Activated B cell treated with CpG ODN at 0.5 μM for 24 hours (primary cell): ENCODE measurements at regions of chr2 and their contacts with region 1.

Region 1: GRCh38 chr2:136117909-136118818 is at the start of gene CXCR4:
- DNase-seq: peak; percentile 90
- ATAC-seq: peak; percentile 51
- H3K4me3 Mint-ChIP-seq: peak within 1 kb of the TSS; percentile 96
- H3K27ac Mint-ChIP-seq: peak within 1 kb of the TSS; percentile 97
- H3K4me1 Mint-ChIP-seq: peaks cover 66% of the 10 kb centered on the region
- H3K27me3 Mint-ChIP-seq: no peaks in the 10 kb centered on the region
- CTCF ChIP-seq: no peak
- total RNA-seq, gene CXCR4: 200 and 213 TPM in 2 replicates

Region 2: DNA sequence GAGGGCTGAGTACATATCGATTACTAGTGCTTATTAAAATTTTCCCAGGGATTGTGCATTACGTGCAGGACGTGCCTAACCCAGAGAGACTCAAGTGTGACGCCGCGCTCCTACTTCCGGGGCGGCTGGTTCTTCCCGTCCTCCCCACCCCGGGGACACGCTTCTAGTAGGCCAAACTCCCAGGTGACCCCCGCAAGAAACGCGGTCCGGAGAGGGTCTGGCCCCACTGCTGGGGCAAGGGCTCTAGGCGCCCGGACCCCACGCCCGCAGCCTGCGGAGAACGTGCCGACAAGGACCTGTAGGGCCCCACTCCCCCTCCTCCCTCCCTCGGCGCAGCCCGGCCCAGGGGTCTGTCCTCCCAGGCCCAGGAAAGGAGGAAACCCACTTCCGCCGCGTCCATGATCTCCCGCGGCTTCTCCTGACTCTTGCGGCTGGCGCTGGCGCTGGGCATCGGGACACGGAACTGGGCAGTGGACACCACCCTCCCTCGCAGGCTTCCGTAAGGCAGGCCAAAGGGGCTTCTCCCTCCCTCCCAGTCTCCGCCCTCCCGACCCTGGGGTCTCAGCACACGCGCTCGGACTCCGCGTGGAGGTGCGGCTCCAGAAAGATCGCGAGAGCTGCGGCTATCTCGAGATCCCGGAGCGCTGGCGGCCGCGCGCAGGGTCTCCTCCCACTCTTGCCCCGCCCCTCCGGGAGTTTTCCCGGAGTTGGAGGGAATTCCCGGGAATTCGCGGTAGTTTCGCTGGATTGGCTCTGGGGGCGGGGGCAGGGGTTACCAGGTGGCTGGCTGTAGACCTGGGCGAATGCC is 132.9 kb before region 1 on chr2 and contains the start of gene DARS1:
- CTCF ChIA-PET with region 1: no interaction called
- POLR2A ChIA-PET with region 1: interaction called, 9 read pairs
- intact Hi-C with region 1: loop called (anchors 1 kb)
- DNase-seq: peak; percentile 80
- ATAC-seq: peak; percentile 86
- H3K4me3 Mint-ChIP-seq: peak within 1 kb of the TSS; percentile 95
- H3K27ac Mint-ChIP-seq: peak within 1 kb of the TSS; percentile 97
- H3K4me1 Mint-ChIP-seq: peaks cover 50% of the 10 kb centered on the region
- H3K27me3 Mint-ChIP-seq: no peaks in the 10 kb centered on the region
- CTCF ChIP-seq: no peak
- total RNA-seq, gene DARS1: 96.3 and 103 TPM in 2 replicates

Region 3: GRCh38 chr2:136029149-136029548 is 89.0 kb before region 1 on chr2:
- CTCF ChIA-PET with region 1: no interaction called
- POLR2A ChIA-PET with region 1: interaction called, 10 read pairs
- intact Hi-C with region 1: no loop called
- DNase-seq: no peak
- ATAC-seq: no peak
- H3K4me3 Mint-ChIP-seq: no peak overlapping the region
- H3K27ac Mint-ChIP-seq: no peak overlapping the region
- H3K4me1 Mint-ChIP-seq: peaks cover 17% of the 10 kb centered on the region
- H3K27me3 Mint-ChIP-seq: no peaks in the 10 kb centered on the region
- CTCF ChIP-seq: no peak

Region 4: GRCh38 chr2:136212423-136213378 is 94.5 kb after region 1 on chr2:
- CTCF ChIA-PET with region 1: interaction called, 9 read pairs
- POLR2A ChIA-PET with region 1: interaction called, 166 read pairs
- intact Hi-C with region 1: no loop called
- DNase-seq: no peak
- ATAC-seq: peak; percentile 72
- H3K4me3 Mint-ChIP-seq: peak overlapping the region; percentile 64
- H3K27ac Mint-ChIP-seq: peak overlapping the region; percentile 97
- H3K4me1 Mint-ChIP-seq: peaks cover 97% of the 10 kb centered on the region
- H3K27me3 Mint-ChIP-seq: no peaks in the 10 kb centered on the region
- CTCF ChIP-seq: no peak

Region 5: GRCh38 chr2:136255648-136256463 is 137.7 kb after region 1 on chr2:
- CTCF ChIA-PET with region 1: no interaction called
- POLR2A ChIA-PET with region 1: interaction called, 63 read pairs
- intact Hi-C with region 1: loop called (anchors 1 kb)
- DNase-seq: no peak
- ATAC-seq: peak; percentile 63
- H3K4me3 Mint-ChIP-seq: peak overlapping the region; percentile 55
- H3K27ac Mint-ChIP-seq: peak overlapping the region; percentile 92
- H3K4me1 Mint-ChIP-seq: peaks cover 86% of the 10 kb centered on the region
- H3K27me3 Mint-ChIP-seq: no peaks in the 10 kb centered on the region
- CTCF ChIP-seq: no peak

Region 6: DNA sequence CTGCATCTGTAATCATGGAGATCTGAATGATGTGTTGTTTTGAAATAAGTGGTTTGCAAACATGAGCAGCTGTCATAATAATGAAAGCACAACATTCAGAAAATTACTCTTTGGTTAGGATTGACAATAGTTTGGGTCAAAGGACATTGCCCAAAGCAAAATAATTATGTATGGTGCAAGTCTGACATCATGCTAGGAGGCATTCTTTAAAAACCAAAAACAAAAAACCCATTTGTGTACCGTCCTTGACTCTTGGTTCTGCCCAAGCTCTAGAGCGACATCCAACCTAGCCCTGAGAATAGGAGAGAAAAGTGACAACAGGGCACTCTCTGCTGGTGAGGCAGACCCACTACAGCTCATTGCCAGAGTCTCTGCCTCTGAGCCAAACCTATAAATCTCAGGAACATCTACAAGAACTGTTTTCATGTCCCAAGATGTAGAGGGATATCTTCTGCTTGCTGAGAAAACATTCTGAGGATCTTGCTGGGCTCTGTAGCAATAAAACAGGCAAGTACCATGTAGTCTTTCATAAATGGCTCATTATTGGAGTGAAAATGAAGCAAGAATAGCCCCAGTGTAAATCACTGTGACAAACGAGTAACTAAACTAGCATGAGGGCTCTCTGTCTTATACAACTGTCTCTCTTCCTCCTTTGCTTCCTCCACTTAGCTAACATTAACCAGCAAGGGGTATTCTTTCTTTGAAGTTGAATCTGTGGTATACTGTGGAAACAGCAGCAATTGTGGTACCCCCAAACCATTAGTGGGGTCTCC is 266.6 kb after region 1 on chr2:
- CTCF ChIA-PET with region 1: interaction called, 4 read pairs
- POLR2A ChIA-PET with region 1: interaction called, 33 read pairs
- intact Hi-C with region 1: loop called (anchors 1 kb)
- DNase-seq: no peak
- ATAC-seq: peak; percentile 67
- H3K4me3 Mint-ChIP-seq: peak overlapping the region; percentile 33
- H3K27ac Mint-ChIP-seq: peak overlapping the region; percentile 94
- H3K4me1 Mint-ChIP-seq: peaks cover 50% of the 10 kb centered on the region
- H3K27me3 Mint-ChIP-seq: no peaks in the 10 kb centered on the region
- CTCF ChIP-seq: peak; percentile 38